Dendritic cell treated with granulocyte-macrophage colony-stimulating factor and Interleukin-4, amounts not matched to agents 40 ng/mL and 50 ng/mL, for 4 days (primary cell): ENCODE measurements at regions of chr12 and their contacts with region 1.

Region 1: DNA sequence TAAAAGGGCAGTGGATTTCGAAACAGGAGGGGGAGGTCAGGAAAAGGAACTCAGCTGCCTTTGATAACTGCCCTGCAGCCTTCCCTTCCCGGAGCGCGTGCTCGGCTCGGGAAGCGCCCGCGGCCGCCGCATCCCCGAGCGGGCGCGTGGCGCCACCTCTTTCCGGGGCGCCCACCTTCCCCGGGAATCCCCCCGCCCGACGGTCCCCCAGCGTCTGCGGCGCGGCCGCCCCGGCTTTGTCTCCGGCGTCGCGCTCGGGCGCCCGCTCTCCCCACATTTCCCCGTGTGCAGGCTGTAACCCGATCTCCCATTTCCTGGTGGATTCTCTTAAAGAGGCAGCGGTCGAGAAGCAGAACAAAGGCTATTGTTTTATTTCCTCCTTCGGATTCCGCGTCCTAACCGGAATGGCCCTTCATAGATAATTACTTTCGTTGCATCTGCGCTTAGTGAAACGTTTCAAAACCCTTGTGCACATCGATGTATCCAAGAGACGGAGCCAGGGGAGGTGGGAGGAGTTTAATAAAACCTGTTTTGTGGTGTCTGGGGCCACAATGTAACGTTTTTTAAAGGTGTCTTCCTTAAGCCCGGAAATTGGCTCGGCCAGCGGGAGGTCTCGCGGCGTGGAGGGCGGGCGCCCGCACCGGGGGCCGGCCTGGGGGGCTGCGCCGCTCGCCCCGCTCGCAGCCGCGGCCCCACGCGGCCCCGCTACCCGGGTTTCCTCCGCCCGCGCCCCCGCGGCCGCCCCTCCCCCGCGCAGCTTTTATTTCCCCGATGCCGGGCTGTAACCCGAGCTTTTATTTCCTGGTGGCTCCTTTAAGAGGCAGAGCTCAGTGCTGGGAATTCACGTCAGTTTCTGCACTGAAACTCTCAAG is at the start of gene ETV6:
- H3K4me3 Mint-ChIP-seq: peak within 1 kb of the TSS; percentile 93
- H3K27ac Mint-ChIP-seq: peak within 1 kb of the TSS; percentile 97
- H3K4me1 Mint-ChIP-seq: peaks cover 22% of the 10 kb centered on the region
- H3K27me3 Mint-ChIP-seq: no peaks in the 10 kb centered on the region

Region 2: GRCh38 chr12:11581179-11581755 is 67.8 kb before region 1 on chr12:
- intact Hi-C with region 1: loop called (anchors 2 kb)
- H3K4me3 Mint-ChIP-seq: no peak overlapping the region
- H3K27ac Mint-ChIP-seq: peak overlapping the region; percentile 82
- H3K4me1 Mint-ChIP-seq: peaks cover 67% of the 10 kb centered on the region
- H3K27me3 Mint-ChIP-seq: no peaks in the 10 kb centered on the region

Region 3: GRCh38 chr12:11615481-11615880 is 33.6 kb before region 1 on chr12:
- intact Hi-C with region 1: no loop called
- H3K4me3 Mint-ChIP-seq: no peak overlapping the region
- H3K27ac Mint-ChIP-seq: no peak overlapping the region
- H3K4me1 Mint-ChIP-seq: peaks cover 9% of the 10 kb centered on the region
- H3K27me3 Mint-ChIP-seq: peaks cover 2% of the 10 kb centered on the region

Region 4: DNA sequence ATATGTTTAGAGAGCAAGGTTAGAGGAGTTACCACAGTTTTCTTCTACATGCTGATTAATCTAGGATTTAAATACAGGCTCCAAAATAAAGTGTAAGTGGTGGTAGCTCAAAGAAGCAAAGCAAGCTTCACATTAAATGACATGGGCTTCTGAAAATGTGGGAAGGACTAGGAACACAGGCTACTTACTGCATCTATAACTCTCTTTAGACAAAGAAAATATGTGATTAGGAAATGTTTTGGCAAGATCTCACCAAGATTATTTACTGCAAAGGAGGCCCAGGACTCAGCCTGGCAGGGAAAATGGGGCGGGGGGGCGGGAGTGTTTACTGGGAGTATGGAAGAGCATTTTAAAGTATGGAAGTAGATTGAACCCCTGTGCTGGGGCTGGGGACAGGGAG is 39.8 kb after region 1 on chr12:
- intact Hi-C with region 1: loop called (anchors 5 kb)
- H3K4me3 Mint-ChIP-seq: no peak overlapping the region
- H3K27ac Mint-ChIP-seq: peak overlapping the region; percentile 35
- H3K4me1 Mint-ChIP-seq: peaks cover 94% of the 10 kb centered on the region
- H3K27me3 Mint-ChIP-seq: no peaks in the 10 kb centered on the region

Region 5: DNA sequence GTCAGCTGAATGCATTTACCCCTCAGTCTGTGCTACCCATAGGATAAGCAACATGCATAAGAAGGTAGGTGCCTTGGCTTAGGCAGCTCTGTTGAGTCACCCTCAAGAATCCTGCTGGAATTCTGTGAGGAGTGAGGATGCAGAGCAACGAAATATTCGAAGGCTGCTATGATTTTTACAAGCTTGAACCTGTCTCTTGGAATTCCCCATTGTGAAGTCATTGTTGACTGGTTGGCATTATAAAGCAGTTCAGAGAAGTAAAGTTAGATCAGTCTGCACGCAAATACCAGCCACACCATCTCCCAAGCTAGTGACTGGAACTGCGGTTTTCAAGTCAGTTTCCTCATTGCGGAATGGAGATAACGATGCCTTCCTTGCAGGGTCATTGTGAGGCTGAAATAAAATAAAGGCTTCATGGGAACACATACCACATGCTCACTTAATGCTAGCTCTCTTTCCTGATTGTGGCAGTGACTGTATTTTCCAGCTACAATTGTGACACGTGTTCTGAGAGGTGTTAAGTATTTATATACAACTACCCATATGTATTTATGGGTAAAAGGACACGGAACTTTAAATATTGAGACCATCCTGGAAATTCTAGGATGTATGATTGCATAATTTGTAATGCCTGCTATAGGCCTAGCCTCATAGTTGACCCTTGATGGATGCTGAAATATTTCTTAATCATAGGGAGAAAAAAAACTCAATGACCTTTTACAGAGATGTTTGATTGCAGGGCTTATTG is 97.1 kb after region 1 on chr12:
- intact Hi-C with region 1: loop called (anchors 5 kb)
- H3K4me3 Mint-ChIP-seq: peak overlapping the region; percentile 44
- H3K27ac Mint-ChIP-seq: peak overlapping the region; percentile 94
- H3K4me1 Mint-ChIP-seq: peaks cover 81% of the 10 kb centered on the region
- H3K27me3 Mint-ChIP-seq: no peaks in the 10 kb centered on the region

Region 6: DNA sequence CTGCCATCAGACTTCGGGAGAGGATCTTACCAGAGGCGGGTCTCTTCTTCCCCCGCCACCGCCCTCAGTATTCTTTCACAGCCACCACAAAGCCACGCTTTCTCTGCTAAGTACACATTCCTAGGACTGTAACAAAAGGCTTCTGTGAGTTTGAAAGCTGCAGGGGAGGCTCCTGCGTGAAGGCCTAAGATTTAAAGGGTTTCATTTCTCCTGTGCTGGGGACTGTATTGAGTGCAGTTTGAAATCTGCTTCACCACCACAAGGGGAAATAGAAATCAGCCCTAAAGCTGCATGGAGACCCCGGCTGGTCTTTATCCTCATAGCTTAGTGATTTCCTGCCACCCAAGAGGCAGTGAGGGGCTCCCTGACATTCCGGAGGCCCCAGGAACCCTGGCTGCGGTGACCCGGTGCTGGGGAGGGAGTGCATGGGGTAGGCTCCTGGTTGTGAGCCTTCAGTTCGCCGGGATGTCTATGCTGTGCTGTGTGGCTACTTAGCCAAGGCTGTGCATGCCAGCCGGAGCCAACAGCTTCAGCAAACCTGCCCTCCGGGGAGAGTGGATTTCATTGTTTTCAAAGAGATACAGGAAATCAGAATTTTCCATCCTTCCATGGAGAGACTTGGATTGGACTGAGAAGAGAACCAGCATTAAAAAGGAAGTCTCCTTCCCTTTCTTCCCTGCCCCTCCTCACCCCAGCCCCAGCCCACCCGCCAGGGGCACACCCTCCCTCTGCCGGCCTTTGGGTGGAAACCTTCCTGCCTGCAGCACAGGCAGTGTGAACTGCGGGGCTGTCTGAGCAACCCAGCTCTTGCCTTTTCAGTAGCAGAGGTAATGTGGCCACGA is 163.7 kb after region 1 on chr12:
- intact Hi-C with region 1: loop called (anchors 5 kb)
- H3K4me3 Mint-ChIP-seq: peak overlapping the region; percentile 73
- H3K27ac Mint-ChIP-seq: peak overlapping the region; percentile 88
- H3K4me1 Mint-ChIP-seq: peaks cover 81% of the 10 kb centered on the region
- H3K27me3 Mint-ChIP-seq: no peaks in the 10 kb centered on the region

Region 7: GRCh38 chr12:11836282-11837151 is 187.4 kb after region 1 on chr12:
- intact Hi-C with region 1: loop called (anchors 5 kb)
- H3K4me3 Mint-ChIP-seq: peak overlapping the region; percentile 42
- H3K27ac Mint-ChIP-seq: peak overlapping the region; percentile 99
- H3K4me1 Mint-ChIP-seq: peaks cover 90% of the 10 kb centered on the region
- H3K27me3 Mint-ChIP-seq: no peaks in the 10 kb centered on the region

Region 8: GRCh38 chr12:12032851-12033588 is 384.0 kb after region 1 on chr12:
- intact Hi-C with region 1: loop called (anchors 5 kb)
- H3K4me3 Mint-ChIP-seq: peak overlapping the region; percentile 66
- H3K27ac Mint-ChIP-seq: peak overlapping the region; percentile 84
- H3K4me1 Mint-ChIP-seq: peaks cover 52% of the 10 kb centered on the region
- H3K27me3 Mint-ChIP-seq: no peaks in the 10 kb centered on the region